Lower lobe of right lung (tissue), 2 donors: ENCODE measurements at regions of chr6 and their contacts with region 1.

Region 1: DNA sequence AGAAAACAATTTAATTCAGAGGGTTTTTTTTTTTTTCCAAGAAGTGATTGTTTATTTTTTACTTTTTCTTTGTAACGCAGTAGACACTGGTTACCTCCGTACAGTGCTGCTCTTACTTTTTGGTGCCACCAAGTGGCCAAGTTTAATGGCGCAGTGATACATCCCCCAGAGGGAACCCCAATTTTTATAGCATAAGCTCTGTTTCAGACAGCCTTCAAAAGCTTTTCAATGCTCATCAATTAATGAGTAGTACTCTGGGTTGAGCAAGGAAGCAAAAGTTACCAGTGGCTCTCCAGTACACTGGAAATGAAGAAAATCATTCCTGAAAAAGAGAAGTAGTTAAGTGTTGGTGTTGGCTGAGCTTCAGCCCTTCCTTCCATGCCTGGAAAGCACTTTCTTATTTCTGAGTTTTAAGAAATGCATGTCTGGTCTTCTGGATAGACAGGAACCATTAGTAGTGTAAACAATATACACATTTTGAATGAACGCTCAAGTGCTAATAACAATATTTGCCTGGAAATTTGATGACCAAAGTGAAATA is 129.1 kb upstream of the SMLR1 start:
- DNase-seq: no peak
- ATAC-seq: peak; percentile 73 to 74
- H3K4me3 ChIP-seq: no peak overlapping the region
- H3K27ac ChIP-seq: no peak overlapping the region
- H3K4me1 ChIP-seq: peaks cover 3% of the 10 kb centered on the region
- H3K27me3 ChIP-seq: no peaks in the 10 kb centered on the region
- CTCF ChIP-seq: peak; percentile 70

Region 2: DNA sequence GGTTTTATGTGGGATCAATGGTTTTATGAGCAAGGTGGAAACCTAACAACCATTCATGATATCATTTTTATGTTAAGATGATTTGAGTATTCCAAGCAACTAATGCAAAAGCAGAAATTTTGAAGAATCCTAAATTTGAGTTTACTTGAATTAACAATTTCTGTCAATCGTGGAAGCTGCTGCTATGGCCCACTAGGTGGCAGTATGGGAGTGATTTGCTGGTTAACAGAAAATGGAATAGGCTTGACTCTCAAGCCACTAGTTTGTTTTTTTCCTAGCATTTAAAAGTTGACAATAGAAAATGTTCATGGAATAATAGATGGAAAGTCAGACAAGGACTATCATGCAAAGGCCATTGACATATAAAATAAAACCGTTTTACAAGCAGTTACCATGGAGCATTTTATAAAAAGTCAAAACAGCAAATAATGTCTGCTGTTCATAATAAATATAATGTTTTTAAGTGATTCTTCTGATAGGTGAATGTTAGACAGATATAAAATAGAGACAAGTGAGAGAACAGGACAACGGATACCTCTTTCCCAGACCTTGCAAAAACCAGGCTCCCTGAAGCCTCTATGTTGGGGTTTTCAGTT is 375.3 kb before region 1 on chr6:
- intact Hi-C with region 1: loop called (anchors 10 kb)
- DNase-seq: no peak
- ATAC-seq: peak in 1 of 2 donors; percentile 56
- H3K4me3 ChIP-seq: no peak overlapping the region
- H3K27ac ChIP-seq: no peak overlapping the region
- H3K4me1 ChIP-seq: no peaks in the 10 kb centered on the region
- H3K27me3 ChIP-seq: no peaks in the 10 kb centered on the region
- CTCF ChIP-seq: peak; percentile 84

Region 3: GRCh38 chr6:130362128-130362527 is 335.9 kb before region 1 on chr6:
- intact Hi-C with region 1: no loop called
- DNase-seq: no peak
- ATAC-seq: no peak
- H3K4me3 ChIP-seq: no peak overlapping the region
- H3K27ac ChIP-seq: no peak overlapping the region
- H3K4me1 ChIP-seq: peaks cover 12% of the 10 kb centered on the region
- H3K27me3 ChIP-seq: peaks cover 19% of the 10 kb centered on the region
- CTCF ChIP-seq: no peak